ENCODE measurements at regions of chr13 and their contacts with region 1.

Region 1: GRCh38 chr13:100235311-100235901 is 146.5 kb downstream of the PCCA start:
- DNase-seq: no peak
- H3K4me3 ChIP-seq: no peak overlapping the region
- CTCF ChIP-seq: peak; percentile 30

Region 2: GRCh38 chr13:99916366-99917103 is 318.9 kb before region 1 on chr13:
- CTCF ChIA-PET with region 1: interaction called, 121 read pairs
- POLR2A ChIA-PET with region 1: no interaction called
- DNase-seq: peak; percentile 23
- H3K4me3 ChIP-seq: no peak overlapping the region
- CTCF ChIP-seq: peak; percentile 92

Region 3: DNA sequence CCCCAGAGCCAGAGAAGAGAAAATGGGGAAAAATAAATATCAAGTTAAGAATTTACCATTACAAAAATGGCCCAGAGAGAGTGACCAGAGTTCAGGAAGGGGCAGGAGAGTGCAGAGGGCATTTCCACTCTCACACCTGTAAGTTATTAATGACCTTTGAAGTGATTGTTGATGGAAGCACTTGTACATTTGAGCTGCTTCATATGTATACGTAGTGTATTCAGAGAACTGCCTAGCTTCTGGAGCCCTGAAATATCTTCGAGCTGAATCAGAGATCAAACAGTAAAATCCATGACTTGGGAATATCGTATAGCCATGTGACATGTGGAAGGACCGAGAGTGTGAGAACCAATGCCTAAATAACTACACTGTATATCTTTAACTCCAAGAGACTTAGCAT is 195.7 kb before region 1 on chr13:
- CTCF ChIA-PET with region 1: interaction called, 13 read pairs
- POLR2A ChIA-PET with region 1: no interaction called
- DNase-seq: no peak
- H3K4me3 ChIP-seq: no peak overlapping the region
- CTCF ChIP-seq: no peak

Region 4: DNA sequence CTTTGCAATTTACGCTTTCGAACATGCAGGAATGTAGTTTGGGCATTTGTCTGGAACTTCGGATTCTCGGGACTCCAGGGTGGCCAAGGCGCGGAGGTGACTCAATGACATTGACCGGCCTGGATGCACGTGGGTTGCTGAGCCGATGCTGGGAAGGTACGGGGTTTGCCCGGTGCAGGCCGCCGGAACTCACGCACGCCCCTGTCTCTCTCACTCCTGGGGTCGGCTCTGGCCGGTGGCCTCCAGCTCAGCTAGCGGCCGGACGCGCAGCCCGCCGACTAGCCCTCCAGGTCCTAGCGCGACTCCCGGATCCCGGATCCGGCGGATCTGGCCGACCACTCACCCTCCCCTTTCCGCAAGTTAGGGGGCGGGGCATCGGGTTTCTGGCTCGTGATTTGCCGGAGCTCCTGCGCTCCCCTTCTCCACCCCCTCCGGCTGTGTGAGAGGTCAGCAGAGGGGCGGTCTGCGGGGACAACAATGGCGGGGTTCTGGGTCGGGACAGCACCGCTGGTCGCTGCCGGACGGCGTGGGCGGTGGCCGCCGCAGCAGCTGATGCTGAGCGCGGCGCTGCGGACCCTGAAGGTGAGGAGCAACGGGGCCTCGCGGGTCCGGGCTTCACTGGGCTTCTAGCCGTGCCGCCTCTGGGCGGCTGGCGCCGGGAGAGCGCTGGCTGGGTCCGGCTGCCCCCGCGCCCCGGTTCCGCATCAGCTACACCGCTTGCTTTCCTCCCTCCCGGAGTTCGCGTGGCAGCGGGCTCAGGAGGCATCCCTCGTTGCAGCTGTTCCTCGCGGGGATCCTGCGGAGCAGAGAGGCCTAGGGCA is 146.6 kb before region 1 on chr13 and contains the start of gene PCCA:
- CTCF ChIA-PET with region 1: interaction called, 13 read pairs
- POLR2A ChIA-PET with region 1: no interaction called
- DNase-seq: peak; percentile 46
- H3K4me3 ChIP-seq: peak within 1 kb of the TSS; percentile 84
- CTCF ChIP-seq: no peak

Region 5: GRCh38 chr13:100266026-100266425 is 30.6 kb after region 1 on chr13:
- CTCF ChIA-PET with region 1: no interaction called
- POLR2A ChIA-PET with region 1: no interaction called
- DNase-seq: no peak
- H3K4me3 ChIP-seq: no peak overlapping the region
- CTCF ChIP-seq: no peak

Region 6: DNA sequence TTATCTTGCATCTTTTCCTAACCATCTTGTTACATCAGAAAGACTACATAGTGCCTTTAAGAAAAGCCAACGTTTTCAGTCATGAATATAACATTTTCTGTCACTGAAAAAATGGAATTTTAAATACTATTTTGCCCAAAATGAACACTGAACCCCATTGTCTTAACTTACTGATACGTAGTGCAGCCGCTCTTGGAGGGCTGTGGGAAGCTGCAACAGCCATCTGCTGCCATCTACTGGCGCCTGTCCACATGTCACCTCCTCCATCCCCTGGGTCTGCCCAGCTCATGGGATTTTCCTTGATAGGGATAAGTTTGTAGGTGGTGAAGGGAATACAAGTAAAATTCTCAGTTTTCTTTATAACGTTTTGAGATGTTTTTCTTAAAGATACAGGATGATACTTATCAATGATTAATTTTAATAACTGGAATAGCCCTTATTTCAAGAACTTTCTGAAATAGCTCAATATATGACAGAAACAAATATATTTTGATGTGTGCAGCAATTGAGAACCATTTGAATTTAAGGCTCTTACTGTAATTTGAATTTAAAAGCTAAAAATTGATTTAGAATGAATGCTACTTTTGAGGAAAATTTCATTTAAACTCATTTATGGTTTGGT is 279.5 kb after region 1 on chr13:
- CTCF ChIA-PET with region 1: interaction called, 17 read pairs
- POLR2A ChIA-PET with region 1: no interaction called
- DNase-seq: no peak
- H3K4me3 ChIP-seq: no peak overlapping the region
- CTCF ChIP-seq: peak; percentile 92